Natural killer cell (primary cell): ENCODE measurements at regions of chr7 and their contacts with region 1.

Region 1: GRCh38 chr7:24979863-24980533 is at the start of gene OSBPL3:
- DNase-seq: peak; percentile 96 to 98
- ATAC-seq: peak; percentile 84 to 95 (median 85)
- H3K4me3 ChIP-seq: peak within 1 kb of the TSS; percentile 93
- H3K4me3 Mint-ChIP-seq: peak within 1 kb of the TSS; percentile 91
- H3K27ac ChIP-seq: peak within 1 kb of the TSS; percentile 85
- H3K27ac Mint-ChIP-seq: peak within 1 kb of the TSS; percentile 92
- H3K4me1 ChIP-seq: peaks cover 25% of the 10 kb centered on the region
- H3K4me1 Mint-ChIP-seq: peaks cover 56 to 66% of the 10 kb centered on the region in 2 donors
- H3K27me3 ChIP-seq: no peaks in the 10 kb centered on the region
- H3K27me3 Mint-ChIP-seq: no peaks in the 10 kb centered on the region
- CTCF ChIP-seq: no peak
- total RNA-seq, gene OSBPL3: 50.7 to 99.1 (median 65.1) TPM

Region 2: DNA sequence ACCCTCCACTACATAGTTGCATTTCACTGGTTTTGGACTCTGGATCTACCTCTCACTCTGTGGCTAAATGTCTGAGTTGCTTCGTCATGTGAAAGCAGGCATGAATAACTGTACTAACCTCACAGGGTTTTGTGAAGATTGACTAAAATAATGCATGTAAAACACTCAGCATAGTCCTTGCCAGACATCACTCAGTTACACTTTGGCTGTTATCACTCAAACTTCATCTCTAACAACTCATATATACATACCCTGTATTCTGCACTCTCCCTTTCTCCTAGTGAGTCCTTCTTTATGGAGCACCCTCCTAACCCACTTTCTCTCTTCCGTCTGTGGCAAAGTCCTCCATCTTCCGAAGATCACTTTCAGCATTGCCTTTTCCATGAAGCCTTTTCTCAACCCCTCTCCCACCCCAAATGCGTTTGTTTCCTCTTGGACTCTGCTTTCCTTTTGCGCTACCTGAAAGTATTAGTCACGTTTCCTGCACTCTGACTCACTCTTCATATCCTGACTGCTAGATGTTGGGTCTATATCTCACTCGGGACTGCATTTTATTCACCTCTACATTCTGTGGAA is 72.6 kb before region 1 on chr7:
- intact Hi-C with region 1: loop called (anchors 2 kb)
- DNase-seq: peak in 1 of 2 donors; percentile 63
- ATAC-seq: peak; percentile 49 to 65 (median 60)
- H3K4me3 ChIP-seq: no peak overlapping the region
- H3K4me3 Mint-ChIP-seq: no peak overlapping the region
- H3K27ac ChIP-seq: peak overlapping the region; percentile 15
- H3K27ac Mint-ChIP-seq: no peak overlapping the region
- H3K4me1 ChIP-seq: peaks cover 57% of the 10 kb centered on the region
- H3K4me1 Mint-ChIP-seq: peaks cover 54 to 57% of the 10 kb centered on the region in 2 donors
- H3K27me3 ChIP-seq: no peaks in the 10 kb centered on the region
- H3K27me3 Mint-ChIP-seq: no peaks in the 10 kb centered on the region
- CTCF ChIP-seq: no peak

Region 3: DNA sequence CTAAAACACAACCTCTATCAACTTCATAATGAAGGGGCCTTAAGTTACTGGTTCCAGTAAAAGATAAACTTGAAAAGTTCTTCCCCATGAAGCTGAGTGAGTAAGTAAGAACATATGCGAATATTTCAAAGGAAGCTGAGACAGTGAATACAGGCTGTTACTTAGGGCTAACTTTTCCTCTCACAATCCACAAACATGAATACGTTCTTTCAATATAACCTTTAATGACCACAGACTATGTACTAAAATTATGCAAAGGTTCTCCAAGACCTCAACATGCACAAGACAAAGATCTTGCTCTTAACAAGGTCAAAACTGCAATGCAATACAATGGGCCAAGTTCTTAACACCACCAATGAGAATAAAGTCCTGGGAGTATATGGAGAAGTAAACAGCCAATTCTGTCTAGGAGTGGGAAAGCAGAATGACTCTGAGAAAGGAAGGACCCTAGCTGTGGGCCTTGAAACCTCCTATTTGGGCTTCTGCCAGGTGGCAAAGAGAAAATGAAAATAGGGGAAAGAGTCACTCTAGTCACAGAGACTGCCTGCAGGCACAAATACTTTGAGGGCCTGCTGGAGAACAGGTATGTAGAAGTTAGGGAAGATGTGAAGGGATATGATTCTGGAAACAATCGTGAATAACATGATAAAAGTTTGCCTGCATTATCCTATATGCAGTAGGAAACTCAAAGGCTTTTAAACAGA is 43.7 kb before region 1 on chr7:
- intact Hi-C with region 1: no loop called
- DNase-seq: no peak
- ATAC-seq: peak in 2 of 3 donors; percentile 21 to 35
- H3K4me3 ChIP-seq: no peak overlapping the region
- H3K4me3 Mint-ChIP-seq: no peak overlapping the region
- H3K27ac ChIP-seq: no peak overlapping the region
- H3K27ac Mint-ChIP-seq: peak overlapping the region; percentile 17 to 60
- H3K4me1 ChIP-seq: peaks cover 3% of the 10 kb centered on the region
- H3K4me1 Mint-ChIP-seq: peaks cover 48 to 73% of the 10 kb centered on the region in 2 donors
- H3K27me3 ChIP-seq: no peaks in the 10 kb centered on the region
- H3K27me3 Mint-ChIP-seq: no peaks in the 10 kb centered on the region
- CTCF ChIP-seq: no peak

Region 4: GRCh38 chr7:24963218-24963617 is 16.8 kb before region 1 on chr7:
- intact Hi-C with region 1: loop called (anchors 1 kb)
- DNase-seq: peak; percentile 16 to 37
- ATAC-seq: peak; percentile 31 to 63 (median 61)
- H3K4me3 ChIP-seq: no peak overlapping the region
- H3K4me3 Mint-ChIP-seq: peak overlapping the region; percentile 33
- H3K27ac ChIP-seq: no peak overlapping the region
- H3K27ac Mint-ChIP-seq: peak overlapping the region; percentile 70 to 88
- H3K4me1 ChIP-seq: peaks cover 26% of the 10 kb centered on the region
- H3K4me1 Mint-ChIP-seq: peaks cover 88 to 89% of the 10 kb centered on the region in 2 donors
- H3K27me3 ChIP-seq: no peaks in the 10 kb centered on the region
- H3K27me3 Mint-ChIP-seq: no peaks in the 10 kb centered on the region
- CTCF ChIP-seq: no peak

Region 5: GRCh38 chr7:25069900-25070443 is 90.0 kb after region 1 on chr7:
- intact Hi-C with region 1: loop called (anchors 5 kb)
- DNase-seq: peak in 1 of 2 donors; percentile 84
- ATAC-seq: peak; percentile 55 to 73 (median 70)
- H3K4me3 ChIP-seq: no peak overlapping the region
- H3K4me3 Mint-ChIP-seq: no peak overlapping the region
- H3K27ac ChIP-seq: no peak overlapping the region
- H3K27ac Mint-ChIP-seq: no peak overlapping the region
- H3K4me1 ChIP-seq: peaks cover 4% of the 10 kb centered on the region
- H3K4me1 Mint-ChIP-seq: no peaks in the 10 kb centered on the region
- H3K27me3 ChIP-seq: no peaks in the 10 kb centered on the region
- H3K27me3 Mint-ChIP-seq: peaks cover 0 to 2% of the 10 kb centered on the region in 2 donors
- CTCF ChIP-seq: peak; percentile 98